Activated CD8-positive, alpha-beta T cell treated with anti-CD3 and anti-CD28 coated beads for 36 hours (primary cell): ENCODE measurements at regions of chr6 and their contacts with region 1.

Region 1: GRCh38 chr6:135176464-135176863 is 4.6 kb upstream of the MYB start:
- DNase-seq: no peak
- ATAC-seq: no peak
- H3K4me3 Mint-ChIP-seq: no peak overlapping the region
- H3K27ac Mint-ChIP-seq: no peak overlapping the region
- H3K4me1 Mint-ChIP-seq: peaks cover 35% of the 10 kb centered on the region
- H3K27me3 Mint-ChIP-seq: no peaks in the 10 kb centered on the region
- CTCF ChIP-seq: no peak

Region 2: DNA sequence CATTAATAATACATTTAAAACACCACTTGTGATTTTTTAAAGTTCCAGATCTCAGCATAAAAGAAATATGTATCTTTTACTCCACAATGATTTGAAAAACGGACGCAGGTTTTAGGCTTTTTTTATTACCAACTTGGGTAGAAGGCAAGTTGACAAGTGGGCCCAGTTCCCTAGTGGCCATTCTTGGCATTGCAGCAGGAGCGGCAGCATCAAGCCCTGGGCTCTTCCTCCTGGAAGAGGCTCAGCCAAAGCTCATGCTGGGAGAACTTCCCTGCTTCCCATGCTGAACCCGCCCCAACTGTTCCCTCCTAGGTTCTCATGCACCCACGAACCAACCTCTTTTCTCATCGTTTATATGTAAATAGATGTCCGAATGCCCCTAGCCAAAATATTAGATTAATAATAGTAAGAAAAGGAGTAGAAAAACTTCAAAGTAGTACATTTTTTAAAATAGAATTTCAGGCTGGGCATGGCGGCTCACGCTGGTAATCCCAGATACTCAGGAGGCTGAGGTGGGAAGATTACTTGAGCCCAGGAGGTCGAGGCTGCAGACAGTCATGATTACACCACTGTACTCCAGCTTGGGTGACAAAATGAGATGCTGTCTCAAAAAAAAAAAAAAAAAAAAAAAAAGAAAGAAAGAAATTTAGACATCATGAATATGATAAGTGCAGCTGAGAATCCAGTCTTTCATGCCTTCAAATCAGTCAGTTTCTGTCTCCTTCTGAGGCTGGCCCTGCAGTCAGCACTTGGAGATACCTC is 13.6 kb before region 1 on chr6:
- CTCF ChIA-PET with region 1: interaction called, 17 read pairs
- POLR2A ChIA-PET with region 1: interaction called, 94 read pairs
- intact Hi-C with region 1: no loop called
- DNase-seq: peak; percentile 66
- ATAC-seq: no peak
- H3K4me3 Mint-ChIP-seq: peak overlapping the region; percentile 51
- H3K27ac Mint-ChIP-seq: peak overlapping the region; percentile 97
- H3K4me1 Mint-ChIP-seq: peaks cover 61% of the 10 kb centered on the region
- H3K27me3 Mint-ChIP-seq: no peaks in the 10 kb centered on the region
- CTCF ChIP-seq: peak; percentile 98

Region 3: DNA sequence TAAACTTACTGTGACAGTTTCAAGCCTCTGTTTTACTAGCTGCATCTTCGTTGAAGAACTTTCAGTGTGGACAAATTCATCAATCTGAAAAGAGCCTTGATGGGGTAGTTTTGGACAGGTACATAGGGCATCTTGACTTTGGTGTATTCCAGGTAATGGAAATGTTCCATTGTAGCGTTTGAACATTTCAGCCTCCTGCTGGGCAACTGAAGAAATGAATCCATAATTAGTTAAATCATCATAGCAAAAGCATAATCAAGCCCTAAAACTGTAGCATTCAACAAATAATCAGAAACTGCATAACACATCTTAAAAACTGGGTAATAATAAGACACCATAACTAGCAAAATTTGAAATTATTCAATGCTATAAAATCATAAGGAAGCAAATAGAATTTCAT is 234.9 kb after region 1 on chr6:
- CTCF ChIA-PET with region 1: no interaction called
- POLR2A ChIA-PET with region 1: no interaction called
- intact Hi-C with region 1: no loop called
- DNase-seq: no peak
- ATAC-seq: no peak
- H3K4me3 Mint-ChIP-seq: no peak overlapping the region
- H3K27ac Mint-ChIP-seq: no peak overlapping the region
- H3K4me1 Mint-ChIP-seq: no peaks in the 10 kb centered on the region
- H3K27me3 Mint-ChIP-seq: no peaks in the 10 kb centered on the region
- CTCF ChIP-seq: peak; percentile 26